Activated naive CD4-positive, alpha-beta T cell treated with anti-CD3 and anti-CD28 coated beads for 36 hours (primary cell): ENCODE measurements at regions of chr5 and their contacts with region 1.

Region 1: DNA sequence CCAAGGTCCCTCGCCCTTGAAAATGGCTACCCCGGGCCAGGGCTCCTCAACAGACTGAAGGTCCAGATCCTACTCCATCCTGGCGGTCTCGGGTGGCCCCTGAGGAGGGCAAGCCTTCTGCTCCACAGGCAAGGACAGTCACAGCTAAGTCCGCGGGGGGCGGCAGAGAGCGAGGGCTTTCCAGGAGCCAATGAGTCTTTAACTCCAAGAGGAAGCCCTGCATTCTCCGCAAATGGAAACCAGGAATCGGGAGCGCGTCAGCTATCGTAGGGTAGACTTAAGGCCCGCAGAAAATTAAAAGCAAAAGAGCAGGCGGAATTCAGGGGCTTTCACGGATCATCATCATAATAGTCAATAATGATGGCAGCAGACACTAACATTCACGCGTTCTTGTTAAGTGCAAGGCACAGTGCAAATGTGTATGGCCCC is 87.8 kb upstream of the TNFAIP8 start:
- DNase-seq: peak; percentile 93
- H3K4me3 Mint-ChIP-seq: peak overlapping the region; percentile 91
- H3K27ac Mint-ChIP-seq: peak overlapping the region; percentile 97
- H3K4me1 Mint-ChIP-seq: peaks cover 64% of the 10 kb centered on the region
- H3K27me3 Mint-ChIP-seq: no peaks in the 10 kb centered on the region

Region 2: DNA sequence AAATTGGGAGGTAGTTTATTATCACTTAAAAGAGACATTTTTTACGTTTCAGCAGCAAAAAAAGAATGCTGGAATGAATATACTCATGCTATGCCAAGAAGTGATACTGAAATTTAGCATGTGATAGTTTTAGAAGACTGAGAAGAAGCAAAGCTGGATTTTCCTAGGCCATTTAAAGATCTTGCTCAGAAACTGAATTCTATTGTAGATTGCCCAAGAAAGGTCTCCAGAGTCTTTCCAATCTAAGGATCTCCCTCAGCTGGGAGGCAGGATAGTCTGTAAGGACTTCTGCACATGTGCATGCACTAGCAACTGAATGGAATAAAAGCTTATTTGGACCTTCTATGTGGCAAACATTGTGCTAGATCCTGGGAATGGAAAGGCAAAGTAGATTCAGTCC is 614.1 kb before region 1 on chr5:
- CTCF ChIA-PET with region 1: no interaction called
- intact Hi-C with region 1: no loop called
- DNase-seq: no peak
- H3K4me3 Mint-ChIP-seq: no peak overlapping the region
- H3K27ac Mint-ChIP-seq: no peak overlapping the region
- H3K4me1 Mint-ChIP-seq: no peaks in the 10 kb centered on the region
- H3K27me3 Mint-ChIP-seq: no peaks in the 10 kb centered on the region

Region 3: DNA sequence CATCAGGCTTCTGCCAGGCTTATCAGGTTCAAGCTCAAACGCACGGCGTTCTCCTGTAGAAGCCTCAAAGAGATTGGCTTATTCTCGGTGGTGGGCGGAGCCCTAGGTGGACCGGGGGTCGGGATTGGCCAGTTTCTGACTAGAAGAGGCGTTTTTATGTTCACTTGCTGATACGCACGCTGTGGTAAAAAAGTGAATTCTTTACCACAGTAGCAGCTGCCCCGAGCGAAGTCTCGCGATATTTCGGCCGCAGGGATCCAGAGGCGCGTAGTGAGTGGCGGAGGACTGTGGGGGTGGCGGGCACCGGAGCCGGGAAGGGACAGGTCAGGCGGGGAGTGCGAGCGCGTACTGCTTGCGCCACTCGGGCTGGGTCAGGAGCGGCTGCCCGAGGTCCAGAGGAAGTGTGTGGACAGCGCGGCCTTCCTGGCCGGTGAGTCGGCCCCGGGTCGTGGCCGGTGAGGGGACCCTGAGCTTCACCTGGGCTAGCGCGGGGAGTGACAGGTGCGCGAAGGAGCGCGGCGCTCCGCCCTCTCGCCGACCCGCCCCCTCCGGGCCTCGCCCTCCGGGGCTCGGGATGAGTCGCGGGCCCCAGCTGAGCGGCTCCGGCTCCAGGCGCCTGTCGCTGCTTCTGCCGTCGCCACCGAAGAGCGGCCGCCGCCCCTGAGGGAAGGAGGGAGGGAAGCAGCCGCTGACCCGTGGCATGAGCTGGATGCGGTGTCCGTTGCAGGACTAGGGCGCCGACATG is 197.0 kb before region 1 on chr5 and contains the start of gene DMXL1:
- CTCF ChIA-PET with region 1: interaction called, 5 read pairs
- intact Hi-C with region 1: loop called (anchors 1 kb)
- DNase-seq: peak; percentile 100
- H3K4me3 Mint-ChIP-seq: peak within 1 kb of the TSS; percentile 95
- H3K27ac Mint-ChIP-seq: peak within 1 kb of the TSS; percentile 97
- H3K4me1 Mint-ChIP-seq: peaks cover 38% of the 10 kb centered on the region
- H3K27me3 Mint-ChIP-seq: peaks cover 2% of the 10 kb centered on the region
- total RNA-seq, gene DMXL1: 16.4 to 18.0 TPM

Region 4: GRCh38 chr5:119079318-119079921 is 188.6 kb before region 1 on chr5:
- CTCF ChIA-PET with region 1: interaction called, 4 read pairs
- intact Hi-C with region 1: loop called (anchors 1 kb)
- DNase-seq: peak; percentile 59
- H3K4me3 Mint-ChIP-seq: no peak overlapping the region
- H3K27ac Mint-ChIP-seq: peak overlapping the region; percentile 54
- H3K4me1 Mint-ChIP-seq: peaks cover 52% of the 10 kb centered on the region
- H3K27me3 Mint-ChIP-seq: no peaks in the 10 kb centered on the region

Region 5: DNA sequence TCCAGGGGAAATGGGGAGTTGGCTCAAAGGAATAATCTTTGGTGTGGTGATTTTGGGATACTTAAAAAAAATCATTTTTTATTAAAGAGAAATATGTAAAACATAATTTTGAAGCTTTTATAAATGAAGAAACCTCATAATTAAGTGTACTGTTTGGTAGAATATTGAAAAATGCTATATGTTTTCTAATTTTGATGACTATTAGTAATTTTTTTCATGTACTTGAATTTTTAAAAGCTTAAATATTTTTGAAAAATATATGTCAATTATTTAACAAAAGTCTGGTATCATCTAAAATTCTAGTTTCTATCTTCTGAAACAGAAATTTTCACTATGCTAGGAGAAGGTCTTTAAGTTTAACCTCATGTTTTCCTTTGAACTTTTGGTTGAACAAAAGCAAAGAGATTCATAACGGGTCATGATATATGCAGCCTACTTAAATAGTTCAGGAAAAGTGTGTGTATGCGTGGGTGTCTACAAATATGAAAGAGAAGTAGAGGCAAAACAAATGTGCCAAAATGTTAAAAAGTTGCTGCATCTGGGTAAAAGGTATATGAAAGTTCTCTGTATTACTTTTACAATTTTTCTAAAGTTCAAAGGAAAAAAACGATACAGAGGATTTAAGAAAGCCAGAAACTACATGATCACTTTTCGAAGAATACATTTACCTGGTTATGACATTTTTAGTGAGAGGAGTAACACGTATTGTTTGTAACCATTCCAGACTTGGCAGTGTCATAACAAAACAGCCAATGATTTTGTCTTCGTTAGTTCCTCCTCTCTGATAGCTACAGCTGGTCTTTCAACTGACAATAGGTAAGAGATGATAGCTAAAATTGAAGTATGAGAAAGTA is 29.5 kb before region 1 on chr5:
- CTCF ChIA-PET with region 1: interaction called, 3 read pairs
- intact Hi-C with region 1: loop called (anchors 1 kb)
- DNase-seq: no peak
- H3K4me3 Mint-ChIP-seq: peak overlapping the region; percentile 43
- H3K27ac Mint-ChIP-seq: peak overlapping the region; percentile 54
- H3K4me1 Mint-ChIP-seq: peaks cover 32% of the 10 kb centered on the region
- H3K27me3 Mint-ChIP-seq: no peaks in the 10 kb centered on the region

Region 6: GRCh38 chr5:119340597-119341218 is 72.7 kb after region 1 on chr5:
- CTCF ChIA-PET with region 1: interaction called, 9 read pairs
- intact Hi-C with region 1: loop called (anchors 2 kb)
- DNase-seq: peak; percentile 68
- H3K4me3 Mint-ChIP-seq: peak overlapping the region; percentile 69
- H3K27ac Mint-ChIP-seq: peak overlapping the region; percentile 96
- H3K4me1 Mint-ChIP-seq: peaks cover 93% of the 10 kb centered on the region
- H3K27me3 Mint-ChIP-seq: no peaks in the 10 kb centered on the region

Region 7: GRCh38 chr5:119355685-119356611 is 88.0 kb after region 1 on chr5 and contains the start of gene TNFAIP8:
- CTCF ChIA-PET with region 1: interaction called, 19 read pairs
- intact Hi-C with region 1: no loop called
- DNase-seq: peak; percentile 91
- H3K4me3 Mint-ChIP-seq: peak within 1 kb of the TSS; percentile 98
- H3K27ac Mint-ChIP-seq: peak within 1 kb of the TSS; percentile 98
- H3K4me1 Mint-ChIP-seq: peaks cover 67% of the 10 kb centered on the region
- H3K27me3 Mint-ChIP-seq: no peaks in the 10 kb centered on the region
- total RNA-seq, gene TNFAIP8: 141 to 142 TPM

Region 8: DNA sequence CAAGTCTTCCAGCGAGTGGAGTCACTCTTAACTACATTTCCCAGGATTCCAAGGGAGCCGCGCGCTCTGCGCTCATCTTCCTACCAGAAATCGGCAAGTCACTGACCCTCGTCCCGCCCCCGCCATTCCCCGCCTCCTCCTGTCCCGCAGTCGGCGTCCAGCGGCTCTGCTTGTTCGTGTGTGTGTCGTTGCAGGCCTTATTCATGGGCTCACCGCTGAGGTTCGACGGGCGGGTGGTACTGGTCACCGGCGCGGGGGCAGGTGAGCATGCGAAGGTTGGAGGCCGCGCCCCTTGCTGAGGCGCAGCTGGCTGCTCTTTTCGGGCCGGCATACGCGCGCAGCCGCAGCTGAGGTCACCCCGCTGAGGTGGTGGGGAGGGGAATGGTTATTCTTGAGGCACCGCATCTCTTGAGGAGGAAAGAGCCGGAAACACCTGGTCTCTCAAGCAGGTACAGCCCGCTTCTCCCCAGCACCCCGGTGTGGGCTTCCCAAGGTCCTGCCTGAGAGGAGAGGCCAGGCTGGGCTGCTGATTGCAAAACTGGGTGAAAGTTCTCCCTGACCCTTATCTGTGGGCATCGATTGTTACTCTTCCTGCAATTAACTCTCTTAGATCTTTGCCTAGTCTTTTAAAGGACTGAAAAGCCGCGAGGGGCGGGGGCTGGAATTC is 184.5 kb after region 1 on chr5 and contains the start of gene HSD17B4:
- CTCF ChIA-PET with region 1: no interaction called
- intact Hi-C with region 1: loop called (anchors 1 kb)
- DNase-seq: peak; percentile 89
- H3K4me3 Mint-ChIP-seq: peak within 1 kb of the TSS; percentile 88
- H3K27ac Mint-ChIP-seq: peak within 1 kb of the TSS; percentile 80
- H3K4me1 Mint-ChIP-seq: peaks cover 18% of the 10 kb centered on the region
- H3K27me3 Mint-ChIP-seq: no peaks in the 10 kb centered on the region
- total RNA-seq, gene HSD17B4: 85.6 to 96.3 TPM